Ovary (tissue), 10 donors: ENCODE measurements at regions of chr3 and their contacts with region 1.

Region 1: GRCh38 chr3:46008058-46008457 is 12.4 kb upstream of the FYCO1 start:
- DNase-seq: no peak
- H3K4me3 ChIP-seq: no peak overlapping the region
- H3K27ac ChIP-seq: no peak overlapping the region
- H3K4me1 ChIP-seq: peaks cover 14% of the 10 kb centered on the region
- H3K27me3 ChIP-seq: no peaks in the 10 kb centered on the region
- CTCF ChIP-seq: no peak
- EP300 ChIP-seq: no peak
- POLR2A ChIP-seq: no peak

Region 2: GRCh38 chr3:45635477-45636256 is 372.4 kb before region 1 on chr3:
- intact Hi-C with region 1: no loop called
- DNase-seq: no peak
- H3K4me3 ChIP-seq: no peak overlapping the region
- H3K27ac ChIP-seq: no peak overlapping the region
- H3K4me1 ChIP-seq: no peaks in the 10 kb centered on the region
- H3K27me3 ChIP-seq: no peaks in the 10 kb centered on the region
- CTCF ChIP-seq: no peak
- EP300 ChIP-seq: no peak
- POLR2A ChIP-seq: no peak

Region 3: GRCh38 chr3:45981321-45982074 is 26.6 kb before region 1 on chr3:
- intact Hi-C with region 1: loop called in 1 of 4 experiments (anchors 2 kb)
- DNase-seq: no peak
- H3K4me3 ChIP-seq: no peak overlapping the region
- H3K27ac ChIP-seq: no peak overlapping the region
- H3K4me1 ChIP-seq: peaks cover 36% of the 10 kb centered on the region
- H3K27me3 ChIP-seq: no peaks in the 10 kb centered on the region
- CTCF ChIP-seq: no peak
- EP300 ChIP-seq: no peak
- POLR2A ChIP-seq: no peak

Region 4: GRCh38 chr3:46078712-46079400 is 70.8 kb after region 1 on chr3:
- intact Hi-C with region 1: no loop called
- DNase-seq: peak; percentile 86 to 96 (median 91)
- H3K4me3 ChIP-seq: no peak overlapping the region
- H3K27ac ChIP-seq: no peak overlapping the region
- H3K4me1 ChIP-seq: peaks cover 3% of the 10 kb centered on the region
- H3K27me3 ChIP-seq: no peaks in the 10 kb centered on the region
- CTCF ChIP-seq: peak; percentile 90 to 99 (median 99)
- EP300 ChIP-seq: no peak
- POLR2A ChIP-seq: no peak